Activated CD4-positive, alpha-beta T cell treated with anti-CD3 and anti-CD28 coated beads for 36 hours (primary cell): ENCODE measurements at regions of chr1 and their contacts with region 1.

Region 1: GRCh38 chr1:161225534-161226319 is at the start of gene TOMM40L:
- DNase-seq: peak; percentile 91
- ATAC-seq: peak; percentile 95
- H3K4me3 Mint-ChIP-seq: peak within 1 kb of the TSS; percentile 97
- H3K27ac Mint-ChIP-seq: peak within 1 kb of the TSS; percentile 98
- H3K4me1 Mint-ChIP-seq: peaks cover 33% of the 10 kb centered on the region
- H3K27me3 Mint-ChIP-seq: no peaks in the 10 kb centered on the region
- total RNA-seq, gene TOMM40L: 12.3 to 13.2 TPM

Region 2: DNA sequence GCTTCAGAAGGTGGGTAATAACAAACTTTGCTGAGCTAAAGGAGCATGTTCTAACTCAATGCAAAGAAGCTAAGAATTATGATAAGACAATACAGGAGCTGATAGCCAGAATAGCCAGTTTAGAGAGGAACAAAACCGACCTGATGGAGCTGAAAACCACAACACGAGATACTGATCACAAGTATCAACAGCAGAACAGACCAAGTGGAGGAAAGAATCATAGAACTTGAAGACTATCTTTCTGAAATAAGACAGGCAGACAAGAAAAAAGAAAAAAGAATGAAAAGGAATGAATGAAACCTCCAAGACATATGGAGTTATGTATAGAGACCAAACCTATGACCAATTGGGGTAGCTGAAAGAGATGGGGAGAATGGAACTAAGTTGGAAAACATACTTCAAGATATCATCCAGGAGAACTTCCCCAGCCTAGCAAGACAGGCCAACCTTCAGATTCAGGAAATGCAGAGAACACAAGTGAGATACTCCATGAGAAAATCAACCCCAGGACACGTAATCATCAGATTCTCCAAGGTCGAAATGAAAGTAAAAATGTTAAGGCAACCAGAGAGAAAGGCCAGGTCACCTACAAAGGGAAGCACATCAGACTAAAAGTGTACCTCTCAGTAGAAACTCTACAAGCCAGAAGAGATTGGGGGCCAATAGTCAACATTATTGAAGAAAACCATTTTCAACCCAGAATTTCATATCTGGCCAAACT is 666.9 kb before region 1 on chr1:
- CTCF ChIA-PET with region 1: no interaction called
- POLR2A ChIA-PET with region 1: no interaction called
- intact Hi-C with region 1: no loop called
- DNase-seq: no peak
- ATAC-seq: no peak
- H3K4me3 Mint-ChIP-seq: peak overlapping the region; percentile 57
- H3K27ac Mint-ChIP-seq: peak overlapping the region; percentile 94
- H3K4me1 Mint-ChIP-seq: peaks cover 58% of the 10 kb centered on the region
- H3K27me3 Mint-ChIP-seq: no peaks in the 10 kb centered on the region

Region 3: DNA sequence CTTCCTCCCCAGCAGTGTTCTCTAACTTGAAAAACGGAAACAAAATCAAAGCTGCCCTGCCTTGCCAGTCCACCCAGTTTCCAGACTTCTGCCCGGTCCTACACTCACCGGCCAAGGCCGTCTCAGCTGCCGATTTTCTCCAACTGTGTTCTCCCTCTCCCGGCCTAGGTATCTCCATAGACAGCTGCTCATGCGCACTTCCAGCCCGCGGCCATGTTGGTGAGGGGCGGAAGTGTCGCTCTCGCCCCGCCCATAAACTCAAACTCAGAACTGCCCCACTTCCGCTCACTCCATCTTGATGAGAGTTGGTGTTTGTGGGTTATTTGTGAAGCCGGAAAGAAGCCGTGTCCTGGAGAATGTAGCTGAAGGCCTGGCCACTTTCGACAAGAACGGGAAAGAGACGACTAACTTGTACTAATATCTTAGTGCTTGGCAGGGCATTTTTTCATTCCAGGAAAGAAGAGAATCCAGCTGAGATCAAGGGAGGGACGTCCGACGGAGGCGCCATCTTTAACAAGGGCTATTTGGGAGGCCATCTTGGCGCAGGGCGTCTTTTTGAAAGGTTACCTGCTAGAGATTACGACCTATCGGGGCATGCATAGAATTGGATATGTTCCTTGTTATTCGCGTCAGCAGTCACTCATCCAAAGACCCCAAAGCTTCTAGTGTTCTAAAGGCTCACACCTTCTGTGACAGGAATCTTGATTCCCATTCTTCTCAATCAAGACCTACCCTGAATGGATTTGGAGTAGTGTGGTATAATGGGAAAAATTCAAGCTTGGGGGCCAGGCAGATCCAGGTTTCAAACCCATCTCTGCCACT is 179.8 kb before region 1 on chr1 and contains the start of gene USF1:
- CTCF ChIA-PET with region 1: interaction called, 5 read pairs
- POLR2A ChIA-PET with region 1: no interaction called
- intact Hi-C with region 1: loop called in 1 of 2 experiments (anchors 1 kb)
- DNase-seq: peak; percentile 96
- ATAC-seq: peak; percentile 86
- H3K4me3 Mint-ChIP-seq: peak within 1 kb of the TSS; percentile 81
- H3K27ac Mint-ChIP-seq: peak within 1 kb of the TSS; percentile 99
- H3K4me1 Mint-ChIP-seq: peaks cover 32% of the 10 kb centered on the region
- H3K27me3 Mint-ChIP-seq: no peaks in the 10 kb centered on the region
- total RNA-seq, gene USF1: 34.5 to 42.8 TPM

Region 4: GRCh38 chr1:161076410-161076809 is 149.3 kb before region 1 on chr1:
- CTCF ChIA-PET with region 1: no interaction called
- POLR2A ChIA-PET with region 1: no interaction called
- intact Hi-C with region 1: no loop called
- DNase-seq: no peak
- ATAC-seq: no peak
- H3K4me3 Mint-ChIP-seq: no peak overlapping the region
- H3K27ac Mint-ChIP-seq: no peak overlapping the region
- H3K4me1 Mint-ChIP-seq: peaks cover 7% of the 10 kb centered on the region
- H3K27me3 Mint-ChIP-seq: peaks cover 2% of the 10 kb centered on the region

Region 5: GRCh38 chr1:161165742-161166668 is 59.7 kb before region 1 on chr1 and contains the start of gene PPOX:
- CTCF ChIA-PET with region 1: interaction called, 9 read pairs
- POLR2A ChIA-PET with region 1: no interaction called
- intact Hi-C with region 1: loop called (anchors 1 to 5 kb)
- DNase-seq: peak; percentile 96
- ATAC-seq: peak; percentile 97
- H3K4me3 Mint-ChIP-seq: peak within 1 kb of the TSS; percentile 87
- H3K27ac Mint-ChIP-seq: peak within 1 kb of the TSS; percentile 90
- H3K4me1 Mint-ChIP-seq: peaks cover 44% of the 10 kb centered on the region
- H3K27me3 Mint-ChIP-seq: no peaks in the 10 kb centered on the region
- total RNA-seq, gene PPOX: 21.5 to 28.8 TPM

Region 6: DNA sequence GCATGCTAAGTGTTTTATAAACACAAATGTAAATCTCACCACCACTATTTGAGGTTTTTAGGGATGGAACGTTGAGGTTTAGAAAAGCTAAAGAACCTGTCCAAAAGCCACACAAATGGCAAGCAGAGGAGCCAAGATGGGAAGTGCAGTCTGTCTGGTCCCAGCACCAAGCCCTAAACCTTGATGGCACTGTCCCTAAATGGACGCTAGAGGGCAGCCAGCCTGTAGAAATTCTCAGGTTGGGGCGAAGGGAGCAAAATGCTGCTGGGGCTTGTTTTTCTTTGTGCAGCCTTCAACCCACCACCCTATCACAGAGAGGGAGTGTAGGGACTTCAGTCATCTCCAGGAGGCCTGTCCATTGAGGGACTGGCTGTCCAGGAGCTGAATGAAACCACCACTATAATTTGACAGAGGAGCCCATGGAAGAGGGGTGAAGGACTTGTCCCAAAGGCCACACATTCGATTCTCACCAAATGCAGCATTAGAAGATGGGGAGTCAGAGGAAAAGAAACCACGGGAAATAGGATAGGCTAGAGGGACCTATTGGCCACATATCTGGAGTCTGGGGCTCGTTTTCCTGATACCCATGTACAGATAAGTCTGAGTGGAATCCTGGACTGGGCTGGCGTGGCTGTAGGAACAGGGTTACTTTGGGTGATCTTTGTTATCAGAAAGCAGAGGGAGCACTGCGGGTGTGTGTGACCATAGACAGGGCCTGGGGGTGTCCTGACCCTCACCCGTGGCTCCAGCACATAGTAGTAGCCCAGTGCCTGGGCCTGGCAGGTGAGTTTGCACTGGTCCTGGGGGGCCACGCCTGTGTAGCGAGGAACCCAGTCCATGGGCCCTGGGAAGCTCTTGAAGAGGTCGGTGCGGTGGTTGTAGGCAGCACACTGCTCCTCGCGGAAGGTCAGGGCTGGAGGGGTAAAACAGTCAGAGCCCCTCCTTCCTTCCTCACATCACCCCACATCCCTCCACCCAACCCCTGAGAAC is 33.0 kb before region 1 on chr1:
- CTCF ChIA-PET with region 1: interaction called, 10 read pairs
- POLR2A ChIA-PET with region 1: no interaction called
- intact Hi-C with region 1: loop called in 1 of 2 experiments (anchors 1 kb)
- DNase-seq: peak; percentile 81
- ATAC-seq: peak; percentile 96
- H3K4me3 Mint-ChIP-seq: no peak overlapping the region
- H3K27ac Mint-ChIP-seq: peak overlapping the region; percentile 74
- H3K4me1 Mint-ChIP-seq: peaks cover 22% of the 10 kb centered on the region
- H3K27me3 Mint-ChIP-seq: no peaks in the 10 kb centered on the region

Region 7: DNA sequence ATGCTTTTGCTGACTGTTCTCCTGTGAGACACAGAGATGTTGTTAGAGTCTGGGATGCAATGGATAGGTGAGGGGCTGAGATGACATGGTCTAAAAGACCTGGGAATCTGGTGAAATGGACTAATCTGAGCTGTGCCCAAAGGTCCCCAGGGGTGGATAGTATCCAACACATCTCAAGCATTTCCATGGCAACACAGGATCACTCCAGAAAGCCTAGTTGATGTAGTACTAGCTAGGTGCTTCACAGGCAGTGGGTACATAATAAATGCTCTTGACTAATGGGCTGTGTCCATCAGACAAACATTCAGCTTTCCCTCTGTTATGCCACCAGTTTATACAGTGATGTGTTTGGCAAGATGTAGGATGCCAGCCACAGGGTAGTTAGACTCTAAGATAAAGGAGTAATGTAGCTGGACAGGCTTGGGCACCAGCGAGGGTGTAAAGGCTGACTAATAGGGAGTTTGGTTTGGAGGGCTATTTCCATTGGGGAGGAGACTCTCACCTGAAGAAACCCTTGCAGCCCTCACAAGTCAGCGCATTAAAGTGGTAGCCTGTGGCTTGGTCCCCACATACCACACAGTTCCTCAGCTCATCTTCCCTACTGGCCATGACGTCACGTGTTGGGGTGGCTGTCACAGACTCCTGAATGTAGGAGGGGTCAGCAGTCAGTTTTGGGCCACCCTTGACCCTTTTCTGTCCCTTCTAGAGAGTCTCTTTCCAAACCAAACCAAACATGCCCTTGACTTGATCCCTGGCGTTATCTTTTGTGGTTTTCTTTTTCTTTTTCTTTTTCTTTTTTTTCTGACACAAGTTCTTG is 10.4 kb after region 1 on chr1:
- CTCF ChIA-PET with region 1: interaction called, 13 read pairs
- POLR2A ChIA-PET with region 1: no interaction called
- intact Hi-C with region 1: no loop called
- DNase-seq: no peak
- ATAC-seq: no peak
- H3K4me3 Mint-ChIP-seq: no peak overlapping the region
- H3K27ac Mint-ChIP-seq: no peak overlapping the region
- H3K4me1 Mint-ChIP-seq: no peaks in the 10 kb centered on the region
- H3K27me3 Mint-ChIP-seq: peaks cover 3% of the 10 kb centered on the region

Region 8: DNA sequence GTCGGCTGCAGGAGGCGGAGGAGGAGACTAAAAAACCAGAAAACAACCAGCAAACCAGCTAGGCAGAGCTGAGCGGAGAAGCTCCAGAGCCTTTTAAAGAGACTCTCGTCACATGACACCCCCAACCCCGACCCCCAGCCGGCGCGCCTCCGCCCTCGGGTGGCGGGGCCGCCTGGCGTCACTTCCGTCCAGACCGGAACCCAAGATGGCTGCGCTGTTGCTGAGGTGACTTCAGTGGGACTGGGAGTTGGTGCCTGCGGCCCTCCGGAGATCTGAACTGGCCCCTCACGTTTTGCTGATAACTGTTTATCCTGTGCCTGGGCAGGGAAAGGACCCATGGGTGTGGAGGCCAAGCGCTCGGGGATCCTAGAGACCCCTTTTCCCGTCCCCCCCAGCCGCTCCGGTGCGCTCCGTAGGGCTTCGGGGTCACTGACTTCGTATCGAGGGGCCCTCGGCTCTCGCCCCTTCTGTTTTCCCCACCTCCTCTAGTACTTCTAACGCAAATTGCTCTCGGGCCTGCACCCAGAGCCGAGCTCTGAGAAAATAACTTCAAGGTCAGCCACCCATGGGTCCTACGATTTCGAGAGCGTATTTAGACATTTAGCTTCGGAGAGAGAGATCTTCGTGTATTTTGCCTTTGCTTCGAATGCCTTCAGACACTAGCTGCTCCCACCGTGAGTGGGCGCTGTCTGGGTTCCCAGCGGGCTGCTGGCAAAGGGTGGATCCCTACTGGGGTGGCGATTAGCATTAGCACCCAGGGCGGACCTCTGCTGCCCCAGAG is 88.7 kb after region 1 on chr1 and contains the start of gene SDHC:
- CTCF ChIA-PET with region 1: interaction called, 11 read pairs
- POLR2A ChIA-PET with region 1: interaction called, 4 read pairs
- intact Hi-C with region 1: loop called (anchors 1 to 2 kb)
- DNase-seq: peak; percentile 94
- ATAC-seq: peak; percentile 98
- H3K4me3 Mint-ChIP-seq: peak within 1 kb of the TSS; percentile 96
- H3K27ac Mint-ChIP-seq: peak within 1 kb of the TSS; percentile 96
- H3K4me1 Mint-ChIP-seq: peaks cover 21% of the 10 kb centered on the region
- H3K27me3 Mint-ChIP-seq: no peaks in the 10 kb centered on the region
- total RNA-seq, gene SDHC: 191 to 235 TPM

Region 9: DNA sequence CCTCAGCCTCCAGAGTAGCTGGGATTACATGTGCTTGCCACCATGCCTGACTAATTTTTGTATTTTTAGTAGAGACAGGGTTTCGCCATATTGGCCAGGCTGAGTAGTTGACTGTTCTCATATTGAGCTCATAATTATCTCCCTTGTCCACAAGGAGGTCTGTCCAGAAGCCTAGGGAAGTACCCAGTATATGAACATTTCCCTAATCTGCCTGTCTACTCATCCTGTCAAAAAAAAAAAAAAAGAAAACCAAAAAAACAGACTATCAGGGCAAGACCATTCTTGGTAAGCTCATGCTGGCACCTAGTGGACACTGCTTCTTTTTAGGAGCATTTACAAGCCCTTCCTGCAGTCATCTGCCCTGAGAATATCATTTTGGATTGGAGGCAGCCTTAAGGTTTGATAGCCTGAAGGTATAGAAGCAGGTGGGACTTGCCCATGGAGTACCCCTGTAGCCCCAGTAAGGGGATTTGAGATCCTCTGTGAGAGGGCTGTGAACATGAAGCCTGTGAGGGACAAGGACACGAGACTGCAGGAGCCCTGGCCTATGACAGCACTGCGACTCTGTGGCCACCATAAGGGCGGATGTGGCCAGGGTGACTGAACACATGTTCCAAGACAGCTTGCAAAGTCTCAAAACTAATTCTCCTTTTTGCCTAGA is 513.0 kb after region 1 on chr1:
- CTCF ChIA-PET with region 1: no interaction called
- POLR2A ChIA-PET with region 1: no interaction called
- intact Hi-C with region 1: loop called in 1 of 2 experiments (anchors 5 kb)
- DNase-seq: peak; percentile 69
- ATAC-seq: peak; percentile 67
- H3K4me3 Mint-ChIP-seq: no peak overlapping the region
- H3K27ac Mint-ChIP-seq: no peak overlapping the region
- H3K4me1 Mint-ChIP-seq: peaks cover 23% of the 10 kb centered on the region
- H3K27me3 Mint-ChIP-seq: peaks cover 15% of the 10 kb centered on the region

Region 10: GRCh38 chr1:162696286-162696862 is 1470.6 kb after region 1 on chr1:
- CTCF ChIA-PET with region 1: no interaction called
- POLR2A ChIA-PET with region 1: no interaction called
- intact Hi-C with region 1: no loop called
- DNase-seq: no peak
- ATAC-seq: no peak
- H3K4me3 Mint-ChIP-seq: no peak overlapping the region
- H3K27ac Mint-ChIP-seq: no peak overlapping the region
- H3K4me1 Mint-ChIP-seq: no peaks in the 10 kb centered on the region
- H3K27me3 Mint-ChIP-seq: peaks cover 6% of the 10 kb centered on the region